Posterior vena cava (tissue), 2 donors: ENCODE measurements at regions of chr1 and their contacts with region 1.

Region 1: DNA sequence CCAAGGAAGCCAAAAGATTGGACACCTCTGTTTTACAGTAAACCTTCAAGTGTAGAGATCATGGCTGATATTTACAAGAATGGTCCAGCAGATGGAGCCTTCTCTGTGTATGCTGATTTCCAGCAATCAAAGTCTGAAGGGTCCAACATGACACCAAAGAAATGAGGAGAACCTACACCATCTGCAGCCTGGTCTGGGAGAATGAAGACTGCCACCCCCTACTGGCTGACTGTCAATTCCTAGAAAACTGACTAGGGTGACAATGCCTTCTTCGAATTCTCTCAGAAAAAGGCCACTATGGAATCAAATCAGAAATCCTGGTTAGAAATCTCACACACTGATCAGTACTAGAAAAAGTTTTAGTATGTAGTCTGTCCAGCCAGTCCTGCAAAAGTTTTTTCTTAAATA is 83.3 kb downstream of the CDC42BPA start:
- DNase-seq: no peak

Region 2: GRCh38 chr1:227215863-227216510 is 19.0 kb before region 1 on chr1:
- intact Hi-C with region 1: loop called in 1 of 2 experiments (anchors 1 kb)
- DNase-seq: no peak

Region 3: DNA sequence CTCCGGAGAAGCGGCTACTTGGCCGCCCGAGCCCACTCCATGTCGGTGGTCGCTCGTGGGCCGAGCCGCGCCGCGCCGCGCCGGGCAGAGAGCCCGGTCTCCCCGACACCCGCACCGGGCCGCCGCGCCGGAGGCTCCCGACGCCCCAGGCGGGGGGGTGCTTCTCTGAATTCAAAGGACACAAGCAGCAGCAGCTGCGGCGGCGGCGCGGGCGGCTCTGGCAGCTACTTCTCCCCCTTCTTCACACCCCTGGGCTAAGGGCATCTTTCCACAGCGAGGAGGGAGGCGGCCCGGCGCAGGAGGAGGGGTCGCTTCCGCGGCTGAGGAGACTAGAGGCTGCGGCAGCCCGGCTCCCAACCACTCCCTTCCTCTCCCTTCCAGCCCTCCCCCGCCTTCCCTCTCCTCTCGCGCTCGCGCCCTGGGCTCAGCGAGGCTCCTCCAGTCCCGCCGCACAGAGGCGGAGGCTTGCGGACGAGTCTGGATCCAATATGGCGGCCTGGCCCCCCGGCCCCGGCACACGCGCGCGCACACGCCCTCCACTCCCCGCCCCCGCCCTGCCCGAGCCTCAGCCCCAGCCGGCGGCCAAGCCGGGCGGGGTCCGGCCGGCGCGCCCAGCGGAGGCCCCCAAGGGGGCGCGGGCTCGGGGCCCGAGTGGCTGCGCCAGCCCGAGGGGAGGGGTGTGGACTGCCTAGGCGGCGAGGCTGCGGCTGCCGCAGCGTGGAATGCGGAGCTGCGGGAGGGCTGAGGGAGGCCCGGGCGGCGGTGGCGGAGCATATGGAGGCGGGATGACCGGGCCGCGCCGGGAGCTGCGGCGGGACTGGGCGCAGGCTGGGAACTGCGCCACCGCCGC is 83.2 kb after region 1 on chr1 and contains the start of gene CDC42BPA:
- intact Hi-C with region 1: loop called in 1 of 2 experiments (anchors 10 kb)
- DNase-seq: peak; percentile 95
- total RNA-seq, gene CDC42BPA: 47.8 to 56.4 TPM